ENCODE measurements at regions of chr1 and their contacts with region 1.

Region 1: GRCh38 chr1:158649052-158649451 is 37.5 kb downstream of the SPTA1 start:
- DNase-seq: peak; percentile 20 to 58 (median 43)
- H3K4me3 ChIP-seq: no peak overlapping the region
- H3K27ac ChIP-seq: no peak overlapping the region
- H3K4me1 ChIP-seq: peaks cover 7 to 22% (median 11%) of the 10 kb centered on the region in 4 experiments
- H3K27me3 ChIP-seq: no peaks in the 10 kb centered on the region

Region 2: DNA sequence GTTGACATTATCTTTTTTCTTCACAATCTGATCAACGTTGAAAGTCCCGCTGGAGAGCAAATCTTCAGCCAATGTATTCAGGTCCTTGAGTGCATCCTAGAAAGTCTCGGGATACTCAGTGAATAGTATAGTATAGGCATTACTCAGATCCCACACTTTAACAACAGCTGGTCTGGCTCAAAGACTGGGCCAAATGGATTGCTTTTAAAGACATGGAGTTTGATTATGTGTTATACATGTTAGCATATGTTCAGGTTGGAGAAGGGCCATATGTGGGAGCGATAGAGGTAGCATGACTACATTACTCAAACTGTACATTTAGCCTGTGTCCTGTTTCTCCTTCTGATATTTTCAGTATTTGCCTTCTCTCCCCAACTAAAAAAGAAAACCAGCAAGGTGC is 10.9 kb before region 1 on chr1:
- CTCF ChIA-PET with region 1: interaction called, 14 read pairs
- POLR2A ChIA-PET with region 1: no interaction called
- DNase-seq: no peak
- H3K4me3 ChIP-seq: no peak overlapping the region
- H3K27ac ChIP-seq: no peak overlapping the region
- H3K4me1 ChIP-seq: peaks cover 0 to 8% (median under 1%) of the 10 kb centered on the region in 4 experiments
- H3K27me3 ChIP-seq: no peaks in the 10 kb centered on the region